CD4-positive, alpha-beta T cell (primary cell): ENCODE measurements at regions of chr9 and their contacts with region 1.

Region 1: GRCh38 chr9:99216073-99216472 is 5.7 kb downstream of the ALG2 start:
- DNase-seq: no peak
- ATAC-seq: no peak
- H3K4me3 ChIP-seq: no peak overlapping the region
- H3K4me3 Mint-ChIP-seq: no peak overlapping the region
- H3K27ac ChIP-seq: no peak overlapping the region
- H3K27ac Mint-ChIP-seq: no peak overlapping the region
- H3K4me1 ChIP-seq: peaks cover 13% of the 10 kb centered on the region
- H3K4me1 Mint-ChIP-seq: peaks cover 42% of the 10 kb centered on the region
- H3K27me3 ChIP-seq: no peaks in the 10 kb centered on the region
- H3K27me3 Mint-ChIP-seq: no peaks in the 10 kb centered on the region
- CTCF ChIP-seq: no peak

Region 2: GRCh38 chr9:98781588-98782383 is 434.3 kb before region 1 on chr9:
- CTCF ChIA-PET with region 1: no interaction called
- POLR2A ChIA-PET with region 1: no interaction called
- intact Hi-C with region 1: no loop called
- DNase-seq: no peak
- ATAC-seq: no peak
- H3K4me3 ChIP-seq: no peak overlapping the region
- H3K4me3 Mint-ChIP-seq: no peak overlapping the region
- H3K27ac ChIP-seq: no peak overlapping the region
- H3K27ac Mint-ChIP-seq: no peak overlapping the region
- H3K4me1 ChIP-seq: no peaks in the 10 kb centered on the region
- H3K4me1 Mint-ChIP-seq: no peaks in the 10 kb centered on the region
- H3K27me3 ChIP-seq: no peaks in the 10 kb centered on the region
- H3K27me3 Mint-ChIP-seq: no peaks in the 10 kb centered on the region
- CTCF ChIP-seq: no peak

Region 3: GRCh38 chr9:99162759-99163364 is 53.2 kb before region 1 on chr9:
- CTCF ChIA-PET with region 1: no interaction called
- POLR2A ChIA-PET with region 1: no interaction called
- intact Hi-C with region 1: loop called in 1 of 2 experiments (anchors 5 kb)
- DNase-seq: peak in 3 of 14 experiments; percentile 43 to 62 (median 61)
- ATAC-seq: peak; percentile 52
- H3K4me3 ChIP-seq: no peak overlapping the region
- H3K4me3 Mint-ChIP-seq: no peak overlapping the region
- H3K27ac ChIP-seq: no peak overlapping the region
- H3K27ac Mint-ChIP-seq: no peak overlapping the region
- H3K4me1 ChIP-seq: peaks cover 3% of the 10 kb centered on the region
- H3K4me1 Mint-ChIP-seq: peaks cover 15% of the 10 kb centered on the region
- H3K27me3 ChIP-seq: no peaks in the 10 kb centered on the region
- H3K27me3 Mint-ChIP-seq: peaks cover 15% of the 10 kb centered on the region
- CTCF ChIP-seq: peak; percentile 66

Region 4: DNA sequence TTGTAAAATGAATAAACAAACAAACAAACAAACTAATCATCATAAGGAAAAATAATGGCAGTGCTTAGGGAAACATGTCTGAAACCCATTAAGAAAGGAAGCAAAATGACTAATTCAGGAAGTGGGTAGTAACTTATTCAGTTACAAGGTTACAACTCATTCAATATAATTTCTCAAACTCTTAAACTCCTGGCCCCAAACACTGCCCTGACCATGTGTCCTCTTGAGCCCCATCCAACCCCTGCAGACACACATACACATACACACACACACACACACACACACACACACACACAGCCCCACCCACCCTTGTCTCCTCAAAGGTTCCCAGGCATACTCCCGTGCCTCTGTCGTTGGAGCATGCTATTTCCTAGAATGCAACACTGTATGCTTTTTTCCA is 199.9 kb after region 1 on chr9:
- CTCF ChIA-PET with region 1: no interaction called
- POLR2A ChIA-PET with region 1: no interaction called
- intact Hi-C with region 1: no loop called
- DNase-seq: no peak
- ATAC-seq: no peak
- H3K4me3 ChIP-seq: no peak overlapping the region
- H3K4me3 Mint-ChIP-seq: no peak overlapping the region
- H3K27ac ChIP-seq: no peak overlapping the region
- H3K27ac Mint-ChIP-seq: no peak overlapping the region
- H3K4me1 ChIP-seq: no peaks in the 10 kb centered on the region
- H3K4me1 Mint-ChIP-seq: no peaks in the 10 kb centered on the region
- H3K27me3 ChIP-seq: peaks cover 0 to 5% of the 10 kb centered on the region in 2 experiments
- H3K27me3 Mint-ChIP-seq: no peaks in the 10 kb centered on the region
- CTCF ChIP-seq: no peak

Region 5: DNA sequence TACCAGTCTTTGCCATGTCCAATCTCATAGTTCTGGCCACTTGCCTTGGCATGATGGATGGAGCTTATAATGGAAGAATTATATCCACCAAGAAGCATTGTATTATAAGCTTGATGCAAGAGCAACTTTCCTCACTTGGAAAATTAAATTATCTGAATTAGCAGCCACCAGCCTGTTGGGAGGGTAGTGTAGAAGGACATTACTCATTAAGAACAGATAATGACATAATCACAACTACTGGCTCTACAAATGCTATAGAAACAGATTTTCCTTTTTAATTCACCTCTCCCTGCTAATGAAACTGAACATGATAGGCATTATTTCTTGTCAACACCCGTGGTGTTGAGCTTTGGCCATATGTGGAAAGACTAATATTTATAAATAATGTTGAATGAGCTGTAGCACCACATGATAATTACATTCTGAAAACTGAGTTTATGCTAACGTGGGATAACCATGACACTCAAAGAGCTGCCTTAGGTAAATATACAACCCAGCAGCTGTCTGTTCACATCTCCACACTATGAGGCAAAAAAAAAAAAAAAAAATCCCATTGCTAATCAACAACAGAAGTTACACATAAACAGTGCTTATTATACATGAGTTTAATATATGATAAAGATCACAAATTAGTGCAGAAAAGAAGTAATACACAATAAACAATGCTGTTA is 557.5 kb after region 1 on chr9:
- CTCF ChIA-PET with region 1: no interaction called
- POLR2A ChIA-PET with region 1: no interaction called
- intact Hi-C with region 1: no loop called
- DNase-seq: no peak
- ATAC-seq: no peak
- H3K4me3 ChIP-seq: no peak overlapping the region
- H3K4me3 Mint-ChIP-seq: no peak overlapping the region
- H3K27ac ChIP-seq: no peak overlapping the region
- H3K27ac Mint-ChIP-seq: no peak overlapping the region
- H3K4me1 ChIP-seq: no peaks in the 10 kb centered on the region
- H3K4me1 Mint-ChIP-seq: no peaks in the 10 kb centered on the region
- H3K27me3 ChIP-seq: peaks cover 0 to 2% of the 10 kb centered on the region in 2 experiments
- H3K27me3 Mint-ChIP-seq: no peaks in the 10 kb centered on the region
- CTCF ChIP-seq: no peak